Right ventricle myocardium inferior (tissue), 1 donor: ENCODE measurements at regions of chr5 and their contacts with region 1.

Region 1: GRCh38 chr5:150656191-150657132 is 4.6 kb upstream of the MYOZ3 start:
- DNase-seq: peak; percentile 88
- ATAC-seq: peak; percentile 65

Region 2: DNA sequence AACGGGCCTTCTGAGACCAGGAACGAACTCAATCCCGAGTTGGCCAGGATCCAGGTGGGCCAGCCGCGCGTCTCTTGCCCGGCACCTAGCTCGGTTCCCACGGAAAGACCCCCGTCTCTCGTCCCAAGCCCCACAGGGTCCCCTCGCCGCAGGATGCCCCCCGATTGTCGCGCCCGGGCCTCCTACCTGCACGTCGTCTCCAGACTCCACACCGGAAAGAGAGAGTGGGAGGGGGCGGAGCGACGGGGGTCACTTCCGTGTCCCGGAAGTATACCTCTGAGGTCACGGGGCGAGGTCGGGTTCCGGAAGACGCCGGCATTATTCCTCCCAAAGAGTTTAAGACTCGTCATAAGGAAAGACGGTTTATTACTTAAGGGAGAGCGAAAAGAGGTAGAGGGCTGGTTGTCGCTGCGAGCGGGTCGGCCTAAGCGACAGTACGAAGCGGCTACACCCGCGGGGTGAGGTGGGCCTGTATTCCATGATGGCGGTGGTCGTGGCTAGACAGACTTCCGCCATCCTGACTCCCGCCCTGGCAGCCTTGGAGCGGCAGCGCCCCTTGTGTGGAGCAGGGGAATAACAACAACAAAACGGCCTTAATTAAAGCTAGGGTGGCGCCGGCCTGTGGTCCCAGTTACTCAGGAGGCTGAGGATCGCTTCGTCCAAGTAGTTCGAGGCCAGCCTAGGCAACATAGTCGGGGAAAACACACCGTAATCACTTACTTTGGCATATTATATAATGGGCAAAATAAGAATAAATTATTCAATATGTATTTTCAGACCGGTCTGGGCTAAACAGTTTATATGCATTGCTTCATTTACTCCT is 206.7 kb before region 1 on chr5 and contains the start of gene RPS14:
- intact Hi-C with region 1: loop called (anchors 10 kb)
- DNase-seq: peak; percentile 96
- ATAC-seq: peak; percentile 98
- total RNA-seq, gene RPS14: 1,267 TPM

Region 3: GRCh38 chr5:150589871-150590601 is 66.4 kb before region 1 on chr5:
- intact Hi-C with region 1: loop called (anchors 2 kb)
- DNase-seq: peak; percentile 83
- ATAC-seq: peak; percentile 78

Region 4: DNA sequence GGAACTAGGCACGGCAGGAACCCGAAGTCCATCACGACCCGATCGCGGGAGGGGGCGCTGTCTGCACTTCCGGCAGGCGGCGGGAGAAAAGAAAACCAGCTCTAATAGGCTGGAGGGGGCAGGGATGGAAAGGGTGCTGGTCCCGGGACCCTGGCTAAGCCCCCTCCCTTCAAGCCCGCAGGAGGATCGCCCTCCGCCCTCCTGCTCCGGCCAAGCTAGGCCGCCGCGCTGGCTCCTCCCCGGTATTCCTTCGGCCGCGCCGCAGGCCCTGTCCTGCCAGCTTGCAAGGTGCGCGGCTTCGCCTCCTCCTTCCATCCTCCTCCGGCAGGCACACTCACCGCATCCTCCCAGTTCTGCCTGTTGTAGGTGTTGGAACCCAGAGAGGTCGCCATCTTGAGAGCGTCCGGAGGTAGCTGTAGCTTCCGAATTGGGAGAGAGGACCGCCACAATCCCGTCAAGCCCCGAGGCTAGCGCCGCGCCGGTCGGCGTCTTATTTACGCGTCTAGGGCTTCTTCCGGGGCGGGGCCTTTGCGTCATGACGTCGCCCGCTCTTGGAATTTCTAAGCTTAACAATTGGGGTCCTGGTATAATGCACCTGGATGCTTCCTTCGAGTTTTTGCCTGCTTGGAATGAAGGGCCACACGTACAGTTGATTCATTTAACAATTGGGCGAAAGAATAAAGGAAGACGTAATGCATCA is 44.3 kb after region 1 on chr5 and contains the start of gene RBM22:
- intact Hi-C with region 1: loop called (anchors 5 kb)
- DNase-seq: peak; percentile 97
- ATAC-seq: peak; percentile 99
- total RNA-seq, gene RBM22: 30.5 TPM